ENCODE measurements at regions of chr12 and their contacts with region 1.

Region 1: GRCh38 chr12:49110464-49111155 is at the start of gene LMBR1L:
- DNase-seq: peak; percentile 95 to 97
- ATAC-seq: peak; percentile 96 to 99 (median 97)
- H3K4me3 ChIP-seq: peak within 1 kb of the TSS; percentile 77
- H3K27ac ChIP-seq: peak within 1 kb of the TSS; percentile 91
- H3K4me1 ChIP-seq: peaks cover 34% of the 10 kb centered on the region
- H3K27me3 ChIP-seq: no peaks in the 10 kb centered on the region
- CTCF ChIP-seq: peak; percentile 47
- total RNA-seq, gene LMBR1L: 13.3 to 27.3 (median 21.3) TPM

Region 2: DNA sequence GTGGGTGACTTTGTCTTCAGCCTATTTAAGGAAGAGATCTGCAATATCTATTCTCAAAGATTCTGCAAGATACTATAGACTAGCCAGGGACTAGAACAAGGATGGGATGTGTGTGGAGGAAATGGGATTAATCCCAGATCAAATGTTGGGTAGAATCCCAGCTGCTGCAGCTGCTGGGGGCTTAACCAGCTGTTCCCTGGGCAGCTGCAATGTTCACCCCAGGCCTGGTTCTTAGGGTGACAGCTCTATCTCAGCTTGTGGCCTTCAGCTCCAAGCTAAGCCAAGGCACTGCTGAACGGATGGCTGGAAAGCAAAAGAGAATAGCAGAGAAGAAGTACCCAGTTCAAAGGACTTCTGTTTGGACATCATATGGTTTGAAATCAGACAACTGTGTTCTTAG is 30.8 kb before region 1 on chr12:
- intact Hi-C with region 1: loop called in 1 of 2 experiments (anchors 5 kb)
- DNase-seq: no peak
- ATAC-seq: no peak
- H3K4me3 ChIP-seq: no peak overlapping the region
- H3K27ac ChIP-seq: no peak overlapping the region
- H3K4me1 ChIP-seq: no peaks in the 10 kb centered on the region
- H3K27me3 ChIP-seq: no peaks in the 10 kb centered on the region
- CTCF ChIP-seq: no peak

Region 3: GRCh38 chr12:49130151-49131050 is 19.8 kb after region 1 on chr12:
- intact Hi-C with region 1: loop called in 1 of 2 experiments (anchors 2 kb)
- DNase-seq: peak; percentile 94 to 96
- ATAC-seq: peak; percentile 81 to 90 (median 83)
- H3K4me3 ChIP-seq: peak overlapping the region; percentile 89
- H3K27ac ChIP-seq: peak overlapping the region; percentile 97
- H3K4me1 ChIP-seq: peaks cover 16% of the 10 kb centered on the region
- H3K27me3 ChIP-seq: no peaks in the 10 kb centered on the region
- CTCF ChIP-seq: peak; percentile 79